ENCODE measurements at regions of chrX and their contacts with region 1.

Region 1: GRCh38 chrX:134520860-134521390 is 61.0 kb downstream of the HPRT1 start:
- DNase-seq: peak; percentile 49
- H3K4me3 Mint-ChIP-seq: no peak overlapping the region
- H3K27ac Mint-ChIP-seq: no peak overlapping the region
- H3K4me1 Mint-ChIP-seq: no peaks in the 10 kb centered on the region
- H3K27me3 Mint-ChIP-seq: no peaks in the 10 kb centered on the region
- CTCF ChIP-seq: no peak

Region 2: GRCh38 chrX:134246282-134246681 is 274.6 kb before region 1 on chrX:
- CTCF ChIA-PET with region 1: no interaction called
- intact Hi-C with region 1: no loop called
- DNase-seq: no peak
- H3K4me3 Mint-ChIP-seq: no peak overlapping the region
- H3K27ac Mint-ChIP-seq: no peak overlapping the region
- H3K4me1 Mint-ChIP-seq: peaks cover 43% of the 10 kb centered on the region
- H3K27me3 Mint-ChIP-seq: no peaks in the 10 kb centered on the region
- CTCF ChIP-seq: no peak

Region 3: DNA sequence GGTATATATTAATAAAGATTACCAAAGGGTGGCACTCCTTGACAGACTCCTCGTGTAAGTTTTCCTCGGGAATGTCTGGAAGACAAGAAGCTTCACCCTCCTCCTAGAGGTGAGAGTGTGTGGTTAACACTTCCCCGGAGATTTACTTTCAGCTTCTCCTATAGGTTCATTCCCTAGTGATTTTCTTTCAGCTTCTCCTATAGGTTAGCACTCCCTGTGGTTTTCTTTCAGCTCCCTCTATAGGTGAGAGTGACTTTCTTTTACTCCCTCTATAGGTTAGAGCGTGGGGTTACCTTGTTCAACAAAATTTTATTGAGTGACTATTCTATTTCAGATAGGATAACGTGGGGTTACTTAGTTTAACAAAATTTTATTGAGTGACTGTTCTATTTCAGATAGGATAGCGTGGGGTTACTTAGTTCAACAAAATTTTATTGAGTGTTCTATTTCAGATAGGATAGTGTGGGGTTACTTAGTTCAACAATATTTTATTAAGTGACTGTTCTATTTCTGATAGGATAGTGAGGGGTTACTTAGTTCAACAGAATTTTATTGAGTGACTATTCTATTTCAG is 243.4 kb after region 1 on chrX:
- CTCF ChIA-PET with region 1: interaction called, 19 read pairs
- intact Hi-C with region 1: no loop called
- DNase-seq: peak; percentile 2
- H3K4me3 Mint-ChIP-seq: no peak overlapping the region
- H3K27ac Mint-ChIP-seq: no peak overlapping the region
- H3K4me1 Mint-ChIP-seq: no peaks in the 10 kb centered on the region
- H3K27me3 Mint-ChIP-seq: no peaks in the 10 kb centered on the region
- CTCF ChIP-seq: peak; percentile 27

Measured in Calu3 (cell line).